ENCODE measurements at regions of chr20 and their contacts with region 1.

Region 1: GRCh38 chr20:24100385-24101011 is 111.9 kb upstream of the GGTLC1 start:
- DNase-seq: peak; percentile 50
- H3K4me3 Mint-ChIP-seq: no peak overlapping the region
- H3K27ac Mint-ChIP-seq: no peak overlapping the region
- H3K4me1 Mint-ChIP-seq: peaks cover 24% of the 10 kb centered on the region
- H3K27me3 Mint-ChIP-seq: peaks cover 9% of the 10 kb centered on the region

Region 2: GRCh38 chr20:23937303-23938117 is 163.0 kb before region 1 on chr20:
- intact Hi-C with region 1: loop called (anchors 2 kb)
- DNase-seq: peak; percentile 49
- H3K4me3 Mint-ChIP-seq: no peak overlapping the region
- H3K27ac Mint-ChIP-seq: no peak overlapping the region
- H3K4me1 Mint-ChIP-seq: peaks cover 1% of the 10 kb centered on the region
- H3K27me3 Mint-ChIP-seq: peaks cover 3% of the 10 kb centered on the region

Region 3: GRCh38 chr20:24045621-24046318 is 54.7 kb before region 1 on chr20:
- intact Hi-C with region 1: loop called (anchors 2 kb)
- DNase-seq: peak; percentile 26
- H3K4me3 Mint-ChIP-seq: no peak overlapping the region
- H3K27ac Mint-ChIP-seq: peak overlapping the region; percentile 57
- H3K4me1 Mint-ChIP-seq: peaks cover 57% of the 10 kb centered on the region
- H3K27me3 Mint-ChIP-seq: no peaks in the 10 kb centered on the region

Region 4: GRCh38 chr20:24056491-24056890 is 44.0 kb before region 1 on chr20:
- intact Hi-C with region 1: no loop called
- DNase-seq: no peak
- H3K4me3 Mint-ChIP-seq: no peak overlapping the region
- H3K27ac Mint-ChIP-seq: no peak overlapping the region
- H3K4me1 Mint-ChIP-seq: peaks cover 6% of the 10 kb centered on the region
- H3K27me3 Mint-ChIP-seq: no peaks in the 10 kb centered on the region

Region 5: DNA sequence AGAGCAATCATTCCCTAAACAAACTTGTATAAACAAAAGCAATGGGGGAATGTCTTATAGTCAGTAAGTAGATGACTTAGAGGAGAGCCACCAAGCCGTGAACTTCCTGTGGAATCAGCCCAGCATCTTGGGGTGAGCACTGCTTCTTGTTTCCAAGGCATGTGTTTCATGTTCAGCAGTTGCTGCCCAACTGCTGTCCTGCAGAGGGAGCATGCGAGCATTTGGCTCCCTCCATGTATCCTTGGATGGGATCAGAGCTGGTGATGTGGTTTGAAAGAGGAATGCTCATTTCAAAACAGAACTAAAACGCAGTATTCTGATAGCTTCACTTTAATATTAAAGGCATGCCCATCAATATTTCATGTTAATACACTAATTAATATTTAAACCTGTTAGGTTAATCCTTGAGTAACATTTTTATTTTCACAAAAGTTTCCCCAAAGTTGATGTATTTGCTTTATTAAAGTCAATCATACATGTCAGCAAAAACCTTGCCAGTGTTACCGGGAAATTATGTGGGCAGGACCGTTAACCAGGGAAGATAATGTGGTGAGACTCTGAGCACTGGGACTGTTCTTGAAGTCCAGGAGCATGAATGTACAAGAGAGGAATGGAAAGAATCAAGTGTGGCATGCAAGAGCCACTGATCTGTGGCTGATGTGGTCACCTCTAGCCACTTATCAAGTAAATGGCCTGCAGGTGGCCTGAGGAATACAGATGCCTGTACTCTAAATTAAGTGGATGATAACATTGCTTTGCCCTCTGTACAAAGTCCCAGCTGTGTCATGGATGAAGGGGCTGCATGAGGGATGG is 60.3 kb after region 1 on chr20:
- intact Hi-C with region 1: loop called (anchors 5 kb)
- DNase-seq: no peak
- H3K4me3 Mint-ChIP-seq: no peak overlapping the region
- H3K27ac Mint-ChIP-seq: no peak overlapping the region
- H3K4me1 Mint-ChIP-seq: peaks cover 9% of the 10 kb centered on the region
- H3K27me3 Mint-ChIP-seq: no peaks in the 10 kb centered on the region